CD8-positive, alpha-beta T cell (primary cell): ENCODE measurements at regions of chr6 and their contacts with region 1.

Region 1: GRCh38 chr6:25788305-25788922 is 33.9 kb downstream of the SLC17A4 start:
- DNase-seq: peak in 7 of 9 experiments; percentile 11 to 63 (median 41)
- ATAC-seq: peak; percentile 52
- H3K4me3 ChIP-seq: no peak overlapping the region
- H3K4me3 Mint-ChIP-seq: no peak overlapping the region
- H3K27ac ChIP-seq: no peak overlapping the region
- H3K27ac Mint-ChIP-seq: no peak overlapping the region
- H3K4me1 ChIP-seq: no peaks in the 10 kb centered on the region
- H3K4me1 Mint-ChIP-seq: no peaks in the 10 kb centered on the region
- H3K27me3 ChIP-seq: no peaks in the 10 kb centered on the region
- H3K27me3 Mint-ChIP-seq: peaks cover 3% of the 10 kb centered on the region
- CTCF ChIP-seq: peak; percentile 37

Region 2: GRCh38 chr6:25882051-25882496 is 93.7 kb after region 1 on chr6:
- CTCF ChIA-PET with region 1: interaction called, 13 read pairs
- POLR2A ChIA-PET with region 1: no interaction called
- intact Hi-C with region 1: loop called (anchors 2 to 5 kb)
- DNase-seq: peak in 6 of 9 experiments; percentile 5 to 71 (median 55)
- ATAC-seq: peak; percentile 85
- H3K4me3 ChIP-seq: peak overlapping the region in 1 of 2 experiments; percentile 42
- H3K4me3 Mint-ChIP-seq: peak overlapping the region; percentile 89
- H3K27ac ChIP-seq: no peak overlapping the region
- H3K27ac Mint-ChIP-seq: peak overlapping the region; percentile 87
- H3K4me1 ChIP-seq: no peaks in the 10 kb centered on the region
- H3K4me1 Mint-ChIP-seq: peaks cover 2% of the 10 kb centered on the region
- H3K27me3 ChIP-seq: no peaks in the 10 kb centered on the region
- H3K27me3 Mint-ChIP-seq: peaks cover 3% of the 10 kb centered on the region
- CTCF ChIP-seq: peak; percentile 33

Region 3: GRCh38 chr6:25889877-25890853 is 101.8 kb after region 1 on chr6:
- CTCF ChIA-PET with region 1: interaction called, 5 read pairs
- POLR2A ChIA-PET with region 1: interaction called, 3 read pairs
- intact Hi-C with region 1: loop called in 1 of 2 experiments (anchors 1 kb)
- DNase-seq: peak in 3 of 9 experiments; percentile 8 to 57 (median 48)
- ATAC-seq: no peak
- H3K4me3 ChIP-seq: no peak overlapping the region
- H3K4me3 Mint-ChIP-seq: no peak overlapping the region
- H3K27ac ChIP-seq: no peak overlapping the region
- H3K27ac Mint-ChIP-seq: no peak overlapping the region
- H3K4me1 ChIP-seq: no peaks in the 10 kb centered on the region
- H3K4me1 Mint-ChIP-seq: no peaks in the 10 kb centered on the region
- H3K27me3 ChIP-seq: no peaks in the 10 kb centered on the region
- H3K27me3 Mint-ChIP-seq: peaks cover 5% of the 10 kb centered on the region
- CTCF ChIP-seq: no peak

Region 4: GRCh38 chr6:25942561-25943147 is 154.2 kb after region 1 on chr6:
- CTCF ChIA-PET with region 1: interaction called, 4 read pairs
- POLR2A ChIA-PET with region 1: no interaction called
- intact Hi-C with region 1: loop called (anchors 1 kb)
- DNase-seq: peak in 2 of 9 experiments; percentile 53 to 67
- ATAC-seq: peak; percentile 38
- H3K4me3 ChIP-seq: no peak overlapping the region
- H3K4me3 Mint-ChIP-seq: no peak overlapping the region
- H3K27ac ChIP-seq: no peak overlapping the region
- H3K27ac Mint-ChIP-seq: no peak overlapping the region
- H3K4me1 ChIP-seq: no peaks in the 10 kb centered on the region
- H3K4me1 Mint-ChIP-seq: peaks cover 3% of the 10 kb centered on the region
- H3K27me3 ChIP-seq: no peaks in the 10 kb centered on the region
- H3K27me3 Mint-ChIP-seq: peaks cover 4% of the 10 kb centered on the region
- CTCF ChIP-seq: peak; percentile 65

Region 5: DNA sequence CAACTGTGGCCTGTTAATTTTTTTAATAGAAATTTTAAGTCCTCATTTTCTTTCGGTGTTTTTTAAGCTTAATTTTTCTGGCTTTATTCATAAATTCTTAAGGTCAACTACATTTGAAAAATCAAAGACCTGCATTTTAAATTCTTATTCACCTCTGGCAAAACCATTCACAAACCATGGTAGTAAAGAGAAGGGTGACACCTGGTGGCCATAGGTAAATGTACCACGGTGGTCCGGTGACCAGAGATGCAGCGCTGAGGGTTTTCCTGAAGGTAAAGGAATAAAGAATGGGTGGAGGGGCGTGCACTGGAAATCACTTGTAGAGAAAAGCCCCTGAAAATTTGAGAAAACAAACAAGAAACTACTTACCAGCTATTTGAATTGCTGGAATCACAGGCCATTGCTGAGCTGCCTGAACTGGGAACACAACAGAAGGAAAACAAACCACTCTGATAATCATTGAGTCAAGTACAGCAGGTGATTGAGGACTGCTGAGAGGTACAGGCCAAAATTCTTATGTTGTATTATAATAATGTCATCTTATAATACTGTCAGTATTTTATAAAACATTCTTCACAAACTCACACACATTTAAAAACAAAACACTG is 309.0 kb after region 1 on chr6:
- CTCF ChIA-PET with region 1: no interaction called
- POLR2A ChIA-PET with region 1: no interaction called
- intact Hi-C with region 1: loop called in 1 of 2 experiments (anchors 10 kb)
- DNase-seq: peak; percentile 22 to 84 (median 71)
- ATAC-seq: peak; percentile 84
- H3K4me3 ChIP-seq: no peak overlapping the region
- H3K4me3 Mint-ChIP-seq: no peak overlapping the region
- H3K27ac ChIP-seq: no peak overlapping the region
- H3K27ac Mint-ChIP-seq: no peak overlapping the region
- H3K4me1 ChIP-seq: no peaks in the 10 kb centered on the region
- H3K4me1 Mint-ChIP-seq: peaks cover 5% of the 10 kb centered on the region
- H3K27me3 ChIP-seq: no peaks in the 10 kb centered on the region
- H3K27me3 Mint-ChIP-seq: no peaks in the 10 kb centered on the region
- CTCF ChIP-seq: peak; percentile 91